ENCODE measurements at regions of chr6 and their contacts with region 1.

Region 1: GRCh38 chr6:158026054-158026900 is 44.6 kb downstream of the SYNJ2 start:
- DNase-seq: peak; percentile 82 to 95 (median 85)
- H3K4me3 ChIP-seq: peak overlapping the region in 1 of 2 donors; percentile 26
- H3K4me3 Mint-ChIP-seq: peak overlapping the region; percentile 84 to 92 (median 88)
- H3K27ac ChIP-seq: peak overlapping the region; percentile 75
- H3K27ac Mint-ChIP-seq: peak overlapping the region; percentile 97 to 99 (median 98)
- H3K4me1 ChIP-seq: peaks cover 47% of the 10 kb centered on the region
- H3K4me1 Mint-ChIP-seq: peaks cover 25 to 63% (median 32%) of the 10 kb centered on the region in 4 donors
- H3K27me3 ChIP-seq: no peaks in the 10 kb centered on the region
- H3K27me3 Mint-ChIP-seq: no peaks in the 10 kb centered on the region

Region 2: DNA sequence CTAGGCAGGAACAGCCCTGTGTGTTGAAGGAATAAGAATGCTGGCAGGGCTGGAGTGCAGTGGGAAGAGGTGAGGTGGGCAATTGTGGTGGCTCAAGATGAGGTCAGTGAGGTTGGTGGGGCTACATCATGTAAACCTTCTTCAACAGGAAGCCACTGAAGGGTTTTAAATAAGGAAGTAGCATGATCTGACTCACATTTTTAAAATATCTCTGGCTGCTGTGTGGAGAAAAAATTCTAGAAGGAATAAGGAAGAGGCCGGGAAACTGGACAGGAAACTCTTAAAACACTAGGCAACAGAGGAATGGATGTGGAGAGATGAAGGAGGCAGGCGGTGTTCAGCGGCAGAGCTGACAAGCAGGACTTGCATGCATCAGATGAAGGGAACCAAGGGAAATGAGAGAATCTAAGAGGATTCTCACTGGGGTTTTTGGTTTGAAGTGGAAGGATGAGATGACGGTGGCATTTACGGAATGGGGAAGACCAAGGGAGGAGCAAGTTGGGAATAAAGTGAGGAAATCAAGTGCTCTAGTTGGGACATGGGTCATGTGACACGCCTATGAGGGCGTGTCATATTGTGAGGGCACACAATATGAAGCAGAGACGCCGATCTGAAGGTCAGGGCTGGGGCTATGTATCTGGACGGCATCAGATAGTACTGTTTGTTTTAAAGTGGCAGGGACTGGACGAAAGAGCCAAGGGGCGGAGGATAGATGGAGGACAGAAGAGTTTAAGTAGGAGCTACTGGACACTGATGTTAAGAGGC is 721.2 kb before region 1 on chr6:
- CTCF ChIA-PET with region 1: no interaction called
- POLR2A ChIA-PET with region 1: no interaction called
- intact Hi-C with region 1: no loop called
- DNase-seq: no peak
- H3K4me3 ChIP-seq: no peak overlapping the region
- H3K4me3 Mint-ChIP-seq: no peak overlapping the region
- H3K27ac ChIP-seq: no peak overlapping the region
- H3K27ac Mint-ChIP-seq: no peak overlapping the region
- H3K4me1 ChIP-seq: no peaks in the 10 kb centered on the region
- H3K4me1 Mint-ChIP-seq: peaks cover 6 to 8% (median 6%) of the 10 kb centered on the region in 4 donors
- H3K27me3 ChIP-seq: no peaks in the 10 kb centered on the region
- H3K27me3 Mint-ChIP-seq: no peaks in the 10 kb centered on the region

Region 3: DNA sequence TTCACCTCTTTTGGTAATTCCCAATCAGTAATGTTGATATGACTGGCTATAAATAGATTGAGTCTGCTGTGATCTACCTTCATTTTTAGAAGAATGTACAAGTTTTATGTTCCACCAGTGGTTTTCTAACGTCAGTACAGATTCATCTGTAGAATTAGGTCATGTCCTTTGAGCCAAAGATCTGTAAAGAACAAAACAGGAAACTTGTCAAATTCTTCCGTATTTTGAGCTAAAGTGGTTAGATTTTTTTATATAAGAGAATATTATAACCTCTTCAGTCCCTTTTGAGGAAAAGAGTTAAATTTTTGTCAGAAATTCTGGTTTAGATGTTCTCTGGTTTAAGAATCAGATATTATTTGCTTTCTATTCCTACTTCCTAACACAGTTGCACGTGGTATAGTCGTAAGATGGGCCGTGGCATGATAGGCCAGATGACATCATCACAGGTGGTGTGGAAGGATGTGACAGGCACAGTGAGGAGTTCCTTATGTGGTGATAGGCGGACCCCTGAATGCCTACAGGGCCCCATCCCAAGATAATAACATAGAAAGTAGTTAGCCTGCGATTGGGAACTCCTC is 141.0 kb before region 1 on chr6:
- CTCF ChIA-PET with region 1: interaction called, 17 read pairs
- POLR2A ChIA-PET with region 1: interaction called, 14 read pairs
- intact Hi-C with region 1: no loop called
- DNase-seq: peak; percentile 73 to 88 (median 86)
- H3K4me3 ChIP-seq: peak overlapping the region in 1 of 2 donors; percentile 21
- H3K4me3 Mint-ChIP-seq: peak overlapping the region in 7 of 8 donors; percentile 7 to 78 (median 42)
- H3K27ac ChIP-seq: peak overlapping the region; percentile 55
- H3K27ac Mint-ChIP-seq: peak overlapping the region; percentile 90 to 98 (median 96)
- H3K4me1 ChIP-seq: peaks cover 35% of the 10 kb centered on the region
- H3K4me1 Mint-ChIP-seq: peaks cover 33 to 74% (median 44%) of the 10 kb centered on the region in 4 donors
- H3K27me3 ChIP-seq: no peaks in the 10 kb centered on the region
- H3K27me3 Mint-ChIP-seq: no peaks in the 10 kb centered on the region

Region 4: GRCh38 chr6:157976345-157977175 is 49.7 kb before region 1 on chr6:
- CTCF ChIA-PET with region 1: interaction called, 48 read pairs
- POLR2A ChIA-PET with region 1: interaction called, 44 read pairs
- intact Hi-C with region 1: loop called (anchors 1 kb)
- DNase-seq: no peak
- H3K4me3 ChIP-seq: no peak overlapping the region
- H3K4me3 Mint-ChIP-seq: peak overlapping the region in 1 of 8 donors; percentile 56
- H3K27ac ChIP-seq: no peak overlapping the region
- H3K27ac Mint-ChIP-seq: no peak overlapping the region
- H3K4me1 ChIP-seq: peaks cover 9% of the 10 kb centered on the region
- H3K4me1 Mint-ChIP-seq: peaks cover 8 to 19% (median 12%) of the 10 kb centered on the region in 4 donors
- H3K27me3 ChIP-seq: no peaks in the 10 kb centered on the region
- H3K27me3 Mint-ChIP-seq: peaks cover 0 to 3% of the 10 kb centered on the region in 2 donors

Region 5: DNA sequence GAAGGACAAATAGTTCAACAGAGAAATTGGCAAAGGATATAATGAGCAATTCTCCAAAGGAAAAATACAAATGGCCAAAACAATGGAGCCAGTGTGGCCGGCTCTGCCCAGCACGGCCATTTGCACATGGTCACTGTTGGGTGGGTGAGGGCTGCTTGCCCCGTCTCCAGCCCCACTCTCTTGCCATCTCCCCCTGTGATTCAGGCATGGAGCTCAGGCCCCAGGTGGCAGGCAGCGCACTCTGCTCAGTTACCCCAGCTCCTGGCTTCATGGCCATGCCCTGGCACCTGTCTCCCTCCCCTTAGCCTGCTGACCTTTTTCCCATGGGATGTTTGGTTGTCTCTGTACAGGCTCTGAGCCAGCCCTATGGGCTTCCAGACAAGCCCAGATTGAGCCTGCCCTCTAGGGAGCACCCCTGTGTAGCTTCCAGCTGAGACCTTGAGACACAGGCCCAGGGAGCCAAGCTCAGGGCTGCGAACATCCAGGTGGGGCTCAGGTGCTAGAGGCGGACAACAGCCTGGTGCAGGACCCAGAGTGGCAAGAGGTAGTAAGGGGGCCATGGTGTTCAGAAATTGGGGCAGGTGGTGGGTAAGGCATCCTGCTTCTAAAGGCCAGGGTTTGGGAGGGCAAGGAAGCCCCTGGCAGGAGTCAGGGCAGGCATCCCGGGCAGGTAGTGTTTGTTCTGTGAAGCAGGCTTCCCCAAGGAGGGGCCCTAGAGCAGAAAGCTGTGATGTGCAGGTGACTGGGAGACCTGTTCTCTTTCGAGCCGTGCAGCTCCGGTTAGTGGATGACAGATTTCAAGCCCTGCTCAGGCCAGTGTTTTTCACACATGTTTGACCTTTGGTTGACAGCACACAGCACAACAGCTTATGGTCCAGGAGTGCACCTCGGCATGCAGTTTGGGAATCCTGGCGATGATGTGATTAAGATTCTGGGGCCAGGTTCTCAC is 26.9 kb before region 1 on chr6:
- CTCF ChIA-PET with region 1: interaction called, 14 read pairs
- POLR2A ChIA-PET with region 1: no interaction called
- intact Hi-C with region 1: no loop called
- DNase-seq: no peak
- H3K4me3 ChIP-seq: no peak overlapping the region
- H3K4me3 Mint-ChIP-seq: no peak overlapping the region
- H3K27ac ChIP-seq: no peak overlapping the region
- H3K27ac Mint-ChIP-seq: peak overlapping the region in 5 of 7 donors; percentile 12 to 84 (median 40)
- H3K4me1 ChIP-seq: peaks cover 29% of the 10 kb centered on the region
- H3K4me1 Mint-ChIP-seq: peaks cover 40 to 76% (median 58%) of the 10 kb centered on the region in 4 donors
- H3K27me3 ChIP-seq: no peaks in the 10 kb centered on the region
- H3K27me3 Mint-ChIP-seq: no peaks in the 10 kb centered on the region

Region 6: GRCh38 chr6:158040051-158040803 is 13.9 kb after region 1 on chr6:
- CTCF ChIA-PET with region 1: interaction called, 33 read pairs
- POLR2A ChIA-PET with region 1: interaction called, 5 read pairs
- intact Hi-C with region 1: loop called (anchors 2 kb)
- DNase-seq: no peak
- H3K4me3 ChIP-seq: no peak overlapping the region
- H3K4me3 Mint-ChIP-seq: no peak overlapping the region
- H3K27ac ChIP-seq: no peak overlapping the region
- H3K27ac Mint-ChIP-seq: peak overlapping the region in 3 of 7 donors; percentile 0 to 44 (median 23)
- H3K4me1 ChIP-seq: peaks cover 6% of the 10 kb centered on the region
- H3K4me1 Mint-ChIP-seq: peaks cover 6 to 26% (median 12%) of the 10 kb centered on the region in 4 donors
- H3K27me3 ChIP-seq: no peaks in the 10 kb centered on the region
- H3K27me3 Mint-ChIP-seq: no peaks in the 10 kb centered on the region

Region 7: DNA sequence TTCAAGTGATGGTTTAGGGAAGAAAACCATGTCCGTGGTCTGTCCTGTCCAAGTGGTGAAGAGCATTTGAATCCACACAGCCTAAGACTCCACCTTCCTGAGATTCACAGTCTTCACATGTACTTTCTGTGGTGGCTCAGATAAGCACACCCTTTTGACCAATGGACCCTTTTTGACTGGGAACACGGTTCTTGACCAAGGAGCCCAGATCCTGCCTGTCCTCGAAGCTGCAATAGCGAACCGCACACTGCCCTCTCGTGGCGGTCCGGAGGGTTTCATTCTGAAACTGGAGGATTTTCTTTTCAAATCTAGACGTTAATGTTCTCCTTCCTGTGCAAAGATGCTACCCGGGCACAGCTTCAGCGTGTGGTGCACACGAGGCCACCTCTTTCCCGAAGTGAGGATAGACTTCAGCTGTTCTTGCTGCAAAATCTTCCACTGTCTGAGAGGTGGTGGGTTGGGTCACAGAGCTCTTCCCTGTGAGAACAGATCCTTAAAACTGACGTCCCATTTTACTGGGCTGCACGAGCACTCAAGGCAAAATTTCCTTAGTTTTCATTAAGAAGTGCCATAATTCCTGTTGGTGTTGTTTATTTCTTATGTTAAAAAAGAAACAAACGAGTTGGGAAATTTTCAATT is 45.9 kb after region 1 on chr6:
- CTCF ChIA-PET with region 1: interaction called, 54 read pairs
- POLR2A ChIA-PET with region 1: interaction called, 5 read pairs
- intact Hi-C with region 1: loop called (anchors 1 kb)
- DNase-seq: peak; percentile 56 to 59 (median 57)
- H3K4me3 ChIP-seq: no peak overlapping the region
- H3K4me3 Mint-ChIP-seq: no peak overlapping the region
- H3K27ac ChIP-seq: no peak overlapping the region
- H3K27ac Mint-ChIP-seq: peak overlapping the region in 5 of 7 donors; percentile 10 to 93 (median 87)
- H3K4me1 ChIP-seq: peaks cover 9% of the 10 kb centered on the region
- H3K4me1 Mint-ChIP-seq: peaks cover 9 to 25% (median 16%) of the 10 kb centered on the region in 4 donors
- H3K27me3 ChIP-seq: no peaks in the 10 kb centered on the region
- H3K27me3 Mint-ChIP-seq: no peaks in the 10 kb centered on the region

Measured in CD4-positive, alpha-beta memory T cell (primary cell).